CD4-positive, alpha-beta memory T cell (primary cell): ENCODE measurements at regions of chr17 and their contacts with region 1.

Region 1: GRCh38 chr17:31008374-31009041 is 37.7 kb downstream of the RNF135 start:
- DNase-seq: peak; percentile 54 to 63 (median 59)
- H3K4me3 ChIP-seq: peak overlapping the region; percentile 61 to 85
- H3K4me3 Mint-ChIP-seq: peak overlapping the region; percentile 92 to 96 (median 94)
- H3K27ac ChIP-seq: peak overlapping the region; percentile 65
- H3K27ac Mint-ChIP-seq: peak overlapping the region; percentile 88 to 97 (median 95)
- H3K4me1 ChIP-seq: peaks cover 8% of the 10 kb centered on the region
- H3K4me1 Mint-ChIP-seq: peaks cover 12 to 26% (median 18%) of the 10 kb centered on the region in 4 donors
- H3K27me3 ChIP-seq: no peaks in the 10 kb centered on the region
- H3K27me3 Mint-ChIP-seq: no peaks in the 10 kb centered on the region

Region 2: DNA sequence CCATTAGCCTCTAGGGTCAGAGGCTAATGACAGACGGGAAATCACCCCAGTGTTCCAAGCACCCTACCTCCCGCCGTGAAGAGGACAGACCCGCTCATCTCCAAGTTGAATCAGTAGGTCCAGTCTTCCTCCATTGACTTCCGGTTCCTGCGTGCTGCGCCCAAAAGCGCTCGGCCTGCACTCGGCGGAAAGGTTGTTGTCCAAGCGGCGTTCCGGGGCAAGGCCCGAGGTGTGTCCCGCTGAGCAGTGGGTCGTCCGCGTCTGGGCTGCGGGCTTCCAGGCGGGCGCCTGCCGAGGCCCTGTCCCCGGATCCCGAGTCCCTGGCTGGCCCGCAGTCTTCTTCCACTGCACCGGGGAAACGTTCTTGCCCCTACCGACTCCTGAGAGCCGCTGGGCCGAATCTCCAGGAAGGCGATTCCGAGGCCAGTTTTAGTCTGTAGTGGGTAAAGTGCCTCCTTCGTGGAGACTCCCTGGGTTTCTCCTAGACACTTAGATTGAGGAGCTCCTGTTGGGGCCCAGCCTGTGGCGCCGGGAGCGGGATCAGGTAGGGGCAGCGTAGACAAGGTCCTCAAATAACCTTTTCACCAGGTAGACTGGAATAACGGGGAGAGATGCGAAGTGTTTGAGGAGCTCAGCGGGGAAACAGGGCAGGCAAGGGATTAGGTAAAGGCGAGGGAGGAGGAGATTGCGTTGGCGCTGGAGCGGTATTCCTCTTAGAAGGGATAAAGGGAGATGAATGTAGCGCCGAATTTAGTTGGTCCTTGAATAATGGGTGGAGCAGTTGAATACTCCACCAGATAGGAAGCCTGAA is 102.2 kb before region 1 on chr17 and contains the start of gene TEFM:
- CTCF ChIA-PET with region 1: no interaction called
- POLR2A ChIA-PET with region 1: interaction called, 3 read pairs
- intact Hi-C with region 1: loop called (anchors 1 kb)
- DNase-seq: peak; percentile 82 to 87 (median 84)
- H3K4me3 ChIP-seq: peak within 1 kb of the TSS; percentile 71 to 94
- H3K4me3 Mint-ChIP-seq: peak within 1 kb of the TSS; percentile 87 to 97 (median 91)
- H3K27ac ChIP-seq: peak within 1 kb of the TSS; percentile 79
- H3K27ac Mint-ChIP-seq: peak within 1 kb of the TSS; percentile 81 to 98 (median 92)
- H3K4me1 ChIP-seq: peaks cover 38% of the 10 kb centered on the region
- H3K4me1 Mint-ChIP-seq: peaks cover 29 to 58% (median 42%) of the 10 kb centered on the region in 4 donors
- H3K27me3 ChIP-seq: no peaks in the 10 kb centered on the region
- H3K27me3 Mint-ChIP-seq: no peaks in the 10 kb centered on the region
- total RNA-seq, gene TEFM: 20.2 to 21.3 TPM

Region 3: DNA sequence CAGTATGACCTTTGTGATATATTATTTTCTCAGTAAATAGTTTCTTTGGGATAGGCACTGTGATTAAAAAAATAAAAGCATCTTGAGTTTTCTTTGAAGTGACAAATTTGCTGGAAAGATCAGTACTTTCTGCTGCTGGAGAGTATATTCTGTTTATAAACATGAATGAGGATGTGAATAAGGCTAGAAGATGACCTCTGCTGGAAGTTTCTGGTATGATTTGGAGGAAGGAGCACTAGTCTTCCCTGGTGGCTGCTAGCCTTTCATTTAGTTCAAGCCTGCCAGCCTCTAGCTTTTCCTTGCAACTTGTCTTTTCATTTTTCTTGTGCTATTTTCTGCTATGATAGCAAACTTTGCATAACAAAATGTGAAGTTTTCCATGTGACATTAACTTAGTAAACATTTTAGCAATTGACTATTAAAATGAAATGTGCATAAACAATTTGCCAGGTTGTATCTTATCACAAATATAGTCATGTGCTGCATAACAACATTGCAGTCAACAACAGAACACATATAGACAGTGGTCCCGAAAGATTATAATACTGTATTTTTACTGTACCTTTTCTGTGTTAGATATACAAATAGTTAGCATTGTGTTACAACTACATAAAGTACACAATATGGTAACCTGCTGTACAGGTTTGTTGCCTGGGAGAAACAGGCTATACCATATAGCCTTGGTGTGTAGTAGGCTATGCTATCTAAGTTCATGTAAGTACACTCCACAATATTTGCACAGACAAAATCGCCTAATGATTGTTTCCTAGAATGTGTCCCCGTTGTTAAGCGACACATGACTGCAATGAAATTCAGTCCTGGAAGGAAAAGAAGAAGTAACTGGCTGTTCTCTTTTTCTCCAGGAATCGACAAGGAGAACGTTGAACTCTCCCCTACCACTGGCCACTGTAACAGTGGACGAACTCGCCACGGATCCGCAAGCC is 364.9 kb after region 1 on chr17:
- CTCF ChIA-PET with region 1: interaction called, 3 read pairs
- POLR2A ChIA-PET with region 1: interaction called, 3 read pairs
- intact Hi-C with region 1: loop called (anchors 1 kb)
- DNase-seq: peak in 4 of 5 donors; percentile 60 to 67 (median 63)
- H3K4me3 ChIP-seq: no peak overlapping the region
- H3K4me3 Mint-ChIP-seq: peak overlapping the region in 1 of 8 donors; percentile 1
- H3K27ac ChIP-seq: no peak overlapping the region
- H3K27ac Mint-ChIP-seq: peak overlapping the region in 1 of 7 donors; percentile 29
- H3K4me1 ChIP-seq: peaks cover 9% of the 10 kb centered on the region
- H3K4me1 Mint-ChIP-seq: peaks cover 11 to 27% (median 20%) of the 10 kb centered on the region in 4 donors
- H3K27me3 ChIP-seq: no peaks in the 10 kb centered on the region
- H3K27me3 Mint-ChIP-seq: no peaks in the 10 kb centered on the region